ENCODE measurements at regions of chr12 and their contacts with region 1.

Region 1: GRCh38 chr12:110048242-110049027 is at the start of gene C12orf76:
- DNase-seq: peak; percentile 89 to 94 (median 91)
- H3K4me3 ChIP-seq: peak within 1 kb of the TSS; percentile 40 to 74
- H3K4me3 Mint-ChIP-seq: peak within 1 kb of the TSS; percentile 89 to 98 (median 94)
- H3K27ac ChIP-seq: peak within 1 kb of the TSS; percentile 61
- H3K27ac Mint-ChIP-seq: peak within 1 kb of the TSS; percentile 89 to 100 (median 98)
- H3K4me1 ChIP-seq: peaks cover 25% of the 10 kb centered on the region
- H3K4me1 Mint-ChIP-seq: peaks cover 20 to 49% (median 26%) of the 10 kb centered on the region in 4 donors
- H3K27me3 ChIP-seq: no peaks in the 10 kb centered on the region
- H3K27me3 Mint-ChIP-seq: no peaks in the 10 kb centered on the region
- total RNA-seq, gene C12orf76: 26.4 to 33.5 TPM

Region 2: DNA sequence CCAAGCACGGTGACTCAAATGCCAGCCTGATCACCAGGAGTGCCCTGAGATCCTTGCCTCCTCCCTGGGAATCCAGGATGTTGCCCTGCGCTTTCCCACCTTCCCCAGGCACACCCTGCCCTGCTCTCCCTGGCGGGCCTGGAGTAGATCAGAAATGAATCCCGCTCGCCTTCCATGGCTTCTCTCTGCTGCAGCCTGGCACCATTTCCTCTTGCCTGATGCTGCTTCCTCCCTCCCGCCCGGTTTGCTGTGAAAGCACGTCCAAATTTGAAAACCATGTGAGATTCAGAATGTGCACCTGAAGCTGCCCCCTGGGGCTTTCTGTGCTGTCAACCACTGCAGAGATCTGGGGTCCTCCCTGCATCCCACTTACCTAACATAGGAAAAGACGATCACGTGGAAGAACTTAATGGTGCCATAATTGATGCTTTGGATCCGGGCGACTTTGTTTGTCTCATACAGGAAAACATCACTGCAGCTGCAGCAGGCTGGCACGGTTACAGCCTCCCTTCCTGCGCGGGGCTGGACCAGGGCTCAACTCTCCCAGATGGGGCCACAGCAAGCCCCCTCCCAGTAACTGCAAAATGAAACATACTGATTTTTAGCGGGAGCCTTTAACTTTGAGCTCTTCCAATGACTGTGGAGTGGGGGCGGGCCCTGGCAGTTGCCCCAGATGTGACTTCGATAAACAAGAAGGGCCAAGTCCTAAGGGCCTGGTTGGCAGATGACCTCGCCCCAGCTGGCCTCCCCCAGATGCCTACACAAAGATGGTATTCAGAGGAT is 24.8 kb after region 1 on chr12:
- CTCF ChIA-PET with region 1: interaction called, 3 read pairs
- POLR2A ChIA-PET with region 1: no interaction called
- intact Hi-C with region 1: loop called (anchors 1 kb)
- DNase-seq: peak in 4 of 5 donors; percentile 8 to 20 (median 18)
- H3K4me3 ChIP-seq: peak overlapping the region; percentile 68 to 72
- H3K4me3 Mint-ChIP-seq: peak overlapping the region; percentile 91 to 96 (median 94)
- H3K27ac ChIP-seq: peak overlapping the region; percentile 18
- H3K27ac Mint-ChIP-seq: peak overlapping the region; percentile 42 to 92 (median 90)
- H3K4me1 ChIP-seq: peaks cover 21% of the 10 kb centered on the region
- H3K4me1 Mint-ChIP-seq: peaks cover 21 to 39% (median 26%) of the 10 kb centered on the region in 4 donors
- H3K27me3 ChIP-seq: no peaks in the 10 kb centered on the region
- H3K27me3 Mint-ChIP-seq: no peaks in the 10 kb centered on the region

Region 3: GRCh38 chr12:110079477-110080400 is 31.3 kb after region 1 on chr12:
- CTCF ChIA-PET with region 1: no interaction called
- POLR2A ChIA-PET with region 1: no interaction called
- intact Hi-C with region 1: loop called (anchors 1 kb)
- DNase-seq: peak; percentile 78 to 84 (median 80)
- H3K4me3 ChIP-seq: peak overlapping the region; percentile 30 to 64
- H3K4me3 Mint-ChIP-seq: peak overlapping the region; percentile 84 to 95 (median 90)
- H3K27ac ChIP-seq: peak overlapping the region; percentile 48
- H3K27ac Mint-ChIP-seq: peak overlapping the region; percentile 90 to 100 (median 98)
- H3K4me1 ChIP-seq: peaks cover 25% of the 10 kb centered on the region
- H3K4me1 Mint-ChIP-seq: peaks cover 17 to 29% (median 20%) of the 10 kb centered on the region in 4 donors
- H3K27me3 ChIP-seq: no peaks in the 10 kb centered on the region
- H3K27me3 Mint-ChIP-seq: no peaks in the 10 kb centered on the region

Region 4: GRCh38 chr12:110124184-110124995 is 76.0 kb after region 1 on chr12 and contains the start of gene IFT81:
- CTCF ChIA-PET with region 1: no interaction called
- POLR2A ChIA-PET with region 1: no interaction called
- intact Hi-C with region 1: loop called (anchors 1 kb)
- DNase-seq: peak; percentile 92 to 95 (median 93)
- H3K4me3 ChIP-seq: peak within 1 kb of the TSS; percentile 70 to 89
- H3K4me3 Mint-ChIP-seq: peak within 1 kb of the TSS; percentile 91 to 96 (median 94)
- H3K27ac ChIP-seq: peak within 1 kb of the TSS; percentile 72
- H3K27ac Mint-ChIP-seq: peak within 1 kb of the TSS; percentile 76 to 97 (median 95)
- H3K4me1 ChIP-seq: peaks cover 10% of the 10 kb centered on the region
- H3K4me1 Mint-ChIP-seq: peaks cover 3 to 15% (median 8%) of the 10 kb centered on the region in 4 donors
- H3K27me3 ChIP-seq: no peaks in the 10 kb centered on the region
- H3K27me3 Mint-ChIP-seq: peaks cover 5 to 10% of the 10 kb centered on the region in 2 donors
- total RNA-seq, gene IFT81: 1.1 to 1.3 TPM